Left colon (tissue), 2 donors: ENCODE measurements at regions of chr17 and their contacts with region 1.

Region 1: GRCh38 chr17:77140166-77140878 is 447 bp upstream of the SEC14L1 start:
- DNase-seq: peak; percentile 98 to 99
- ATAC-seq: peak; percentile 94

Region 2: DNA sequence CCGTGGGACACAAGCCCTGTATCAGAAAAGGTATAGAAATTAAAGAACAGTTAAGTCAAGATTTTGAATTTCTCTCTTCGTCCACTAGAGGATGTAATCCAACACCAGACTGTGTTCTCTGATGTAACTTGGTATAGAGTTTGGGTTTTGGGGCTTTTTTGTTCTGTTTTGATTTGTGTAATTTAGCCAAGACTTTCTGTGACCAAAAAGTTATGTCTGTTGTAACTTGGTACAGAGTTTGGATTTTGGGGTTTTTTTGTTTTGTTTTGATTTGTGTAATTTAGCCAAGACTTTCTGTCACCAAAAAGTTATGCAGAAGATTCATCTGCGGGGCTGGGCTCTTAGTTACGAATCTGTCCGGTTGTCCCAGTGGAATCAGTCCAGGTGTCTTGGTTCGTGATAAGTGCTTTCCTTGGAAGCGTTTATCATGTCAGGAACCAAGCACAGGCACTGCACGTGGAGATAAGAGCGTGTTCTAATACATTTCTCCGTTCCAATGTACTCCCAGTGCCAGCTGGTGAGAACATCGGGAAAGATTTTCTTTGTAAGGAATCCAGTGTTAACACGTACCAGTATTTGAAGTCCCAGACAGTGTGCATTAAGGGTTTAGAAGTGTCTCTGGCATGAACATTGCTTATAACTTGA is 43.6 kb before region 1 on chr17:
- intact Hi-C with region 1: loop called in 1 of 2 experiments (anchors 10 kb)
- DNase-seq: no peak
- ATAC-seq: peak; percentile 42